ENCODE measurements at regions of chr3 and their contacts with region 1.

Region 1: GRCh38 chr3:39707314-39707909 is 102.0 kb upstream of the MYRIP start:
- DNase-seq: peak; percentile 65
- H3K4me3 ChIP-seq: no peak overlapping the region
- H3K27ac ChIP-seq: no peak overlapping the region
- H3K4me1 ChIP-seq: peaks cover 7% of the 10 kb centered on the region
- H3K27me3 ChIP-seq: no peaks in the 10 kb centered on the region
- CTCF ChIP-seq: peak; percentile 39 to 61
- POLR2A ChIP-seq: no peak

Region 2: DNA sequence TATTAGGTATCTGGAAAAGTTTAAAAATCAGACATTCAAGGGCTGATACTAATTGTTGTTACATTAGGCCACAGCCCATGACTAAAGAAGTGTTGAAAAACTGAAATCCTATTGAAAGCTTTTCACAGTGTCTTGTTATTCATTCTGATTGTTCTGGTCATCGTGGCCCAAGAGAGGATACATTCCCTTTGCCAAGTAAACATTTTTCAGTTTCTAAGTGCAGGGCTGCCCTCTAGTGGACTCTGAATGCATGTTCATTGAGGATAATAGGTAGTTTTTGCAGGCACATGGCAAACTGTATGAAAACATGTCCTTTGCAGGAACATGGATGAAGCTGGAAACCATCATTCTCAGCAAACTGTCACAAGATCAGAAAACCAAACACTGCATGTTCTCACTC is 283.1 kb after region 1 on chr3:
- CTCF ChIA-PET with region 1: interaction called, 3 read pairs
- POLR2A ChIA-PET with region 1: no interaction called
- dilution Hi-C with region 1: no loop called
- intact Hi-C with region 1: loop called (anchors 1 kb)
- DNase-seq: peak; percentile 70
- H3K4me3 ChIP-seq: no peak overlapping the region
- H3K27ac ChIP-seq: no peak overlapping the region
- H3K4me1 ChIP-seq: no peaks in the 10 kb centered on the region
- H3K27me3 ChIP-seq: no peaks in the 10 kb centered on the region
- CTCF ChIP-seq: peak; percentile 34 to 36
- POLR2A ChIP-seq: no peak

Region 3: DNA sequence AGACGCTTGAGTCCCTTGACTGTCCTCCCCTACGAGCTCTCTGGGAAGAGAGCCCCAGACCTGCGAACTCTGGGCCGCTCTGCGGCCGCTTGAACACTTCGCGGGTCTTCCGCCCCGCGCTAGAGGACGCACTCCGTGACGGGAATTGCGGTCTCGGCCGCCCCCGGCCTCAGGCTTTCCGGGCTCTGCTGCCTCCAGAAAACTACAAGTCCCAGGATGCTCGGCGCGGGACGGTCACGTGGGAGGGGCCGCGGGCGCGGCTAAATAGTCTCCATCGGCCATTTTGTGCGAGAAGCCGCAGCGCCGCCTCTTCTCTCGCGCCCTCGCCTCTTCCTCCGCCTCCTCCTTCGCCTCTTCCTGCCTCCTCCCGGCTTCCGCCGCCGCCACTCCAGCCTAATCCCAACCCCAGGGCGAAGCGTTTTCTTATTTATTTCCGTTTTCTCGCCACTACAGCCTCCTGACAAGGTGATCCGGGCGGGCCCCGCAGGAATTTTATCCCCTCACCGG is 602.1 kb after region 1 on chr3 and contains the start of gene EIF1B:
- CTCF ChIA-PET with region 1: no interaction called
- POLR2A ChIA-PET with region 1: no interaction called
- dilution Hi-C with region 1: no loop called
- intact Hi-C with region 1: loop called (anchors 5 kb)
- DNase-seq: peak; percentile 99
- H3K4me3 ChIP-seq: peak within 1 kb of the TSS; percentile 85 to 100 (median 98)
- H3K27ac ChIP-seq: peak within 1 kb of the TSS; percentile 93
- H3K4me1 ChIP-seq: peaks cover 14% of the 10 kb centered on the region
- H3K27me3 ChIP-seq: no peaks in the 10 kb centered on the region
- CTCF ChIP-seq: peak; percentile 96 to 97
- POLR2A ChIP-seq: peak; percentile 96
- total RNA-seq, gene EIF1B: 44.1 and 46.0 TPM in 2 replicates